A673 (cell line): ENCODE measurements at regions of chr5 and their contacts with region 1.

Region 1: DNA sequence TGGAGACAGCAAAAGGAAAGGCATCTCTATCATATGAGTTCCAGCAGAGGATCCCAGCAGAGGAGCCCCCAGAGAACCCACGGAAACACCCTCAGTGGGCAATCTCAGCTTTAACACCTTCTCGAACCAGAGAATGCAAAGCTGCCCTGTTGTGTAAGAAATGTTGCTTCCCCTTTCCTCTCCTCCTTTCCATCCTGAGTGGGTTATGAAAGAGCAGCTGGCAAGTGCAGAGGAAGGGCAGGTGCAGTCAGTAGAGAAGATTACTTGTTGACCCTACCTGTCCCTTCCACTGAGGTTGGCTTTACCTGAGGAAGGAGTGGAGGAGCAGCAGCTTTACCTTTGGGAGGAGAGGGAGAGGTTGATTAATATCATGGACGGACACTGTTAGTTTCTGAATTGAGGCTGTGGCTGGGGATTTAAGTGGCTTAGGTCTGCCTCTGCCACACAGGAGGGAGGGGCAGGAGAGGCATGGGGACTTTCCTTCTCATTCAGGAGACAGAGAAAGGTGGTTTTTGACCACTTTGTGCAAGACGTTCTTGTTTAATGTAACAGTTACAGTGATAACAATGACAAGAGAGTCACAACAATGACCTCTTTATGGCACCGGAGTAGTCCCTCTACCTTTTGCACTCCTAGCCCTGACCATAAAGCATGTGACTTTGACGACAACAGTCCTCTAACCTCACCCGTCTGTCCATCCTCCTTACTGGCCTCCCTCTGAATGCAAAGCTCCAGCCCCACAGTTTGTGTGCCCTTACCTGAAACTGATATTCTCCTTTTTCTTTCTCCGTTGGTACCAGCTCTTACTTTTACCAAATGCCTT is 254.8 kb downstream of the NSG2 start:
- DNase-seq: no peak
- H3K4me3 ChIP-seq: no peak overlapping the region
- H3K27ac ChIP-seq: no peak overlapping the region
- H3K4me1 ChIP-seq: no peaks in the 10 kb centered on the region
- H3K27me3 ChIP-seq: peaks cover 5% of the 10 kb centered on the region
- CTCF ChIP-seq: no peak

Region 2: DNA sequence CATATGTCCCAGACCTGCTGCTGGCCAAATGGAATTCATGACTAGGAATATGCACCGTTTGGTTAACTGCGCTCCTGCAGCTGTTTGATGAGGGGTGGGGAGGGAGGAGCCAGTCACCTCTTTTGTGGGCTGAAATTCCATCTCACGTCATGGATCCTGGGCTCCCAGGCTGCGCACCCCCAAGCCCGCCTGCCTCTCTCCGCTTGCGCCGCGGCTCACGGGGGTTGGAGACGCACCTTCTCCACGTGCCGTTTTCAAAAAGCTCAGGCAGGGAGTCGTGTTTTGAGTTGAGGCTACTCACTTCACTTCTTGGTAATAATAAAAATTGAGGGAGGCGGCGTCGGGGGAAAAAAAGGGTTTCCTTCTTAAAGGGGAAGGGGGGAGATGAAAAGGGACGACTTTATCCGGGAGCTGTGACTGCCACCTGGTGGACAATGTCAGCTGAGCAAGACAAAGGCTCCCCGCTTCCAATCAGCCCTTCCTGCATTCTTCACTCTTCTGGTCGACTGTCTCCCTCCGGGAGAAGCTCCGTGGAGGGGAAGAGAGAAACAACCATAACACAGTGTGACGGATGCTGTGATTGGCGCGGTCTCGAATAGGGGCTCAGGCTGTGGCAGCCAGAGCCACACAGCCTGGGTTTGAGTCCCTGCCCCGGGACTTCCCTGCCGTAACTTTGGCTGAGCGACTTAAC is 327.3 kb before region 1 on chr5:
- CTCF ChIA-PET with region 1: interaction called, 11 read pairs
- POLR2A ChIA-PET with region 1: no interaction called
- intact Hi-C with region 1: no loop called
- DNase-seq: peak; percentile 72
- H3K4me3 ChIP-seq: peak overlapping the region; percentile 31
- H3K27ac ChIP-seq: no peak overlapping the region
- H3K4me1 ChIP-seq: no peaks in the 10 kb centered on the region
- H3K27me3 ChIP-seq: no peaks in the 10 kb centered on the region
- CTCF ChIP-seq: peak; percentile 79

Region 3: GRCh38 chr5:174172152-174172551 is 128.2 kb before region 1 on chr5:
- CTCF ChIA-PET with region 1: no interaction called
- POLR2A ChIA-PET with region 1: no interaction called
- intact Hi-C with region 1: no loop called
- DNase-seq: no peak
- H3K4me3 ChIP-seq: no peak overlapping the region
- H3K27ac ChIP-seq: no peak overlapping the region
- H3K4me1 ChIP-seq: no peaks in the 10 kb centered on the region
- H3K27me3 ChIP-seq: no peaks in the 10 kb centered on the region
- CTCF ChIP-seq: no peak

Region 4: GRCh38 chr5:174371595-174372128 is 71.3 kb after region 1 on chr5:
- CTCF ChIA-PET with region 1: no interaction called
- POLR2A ChIA-PET with region 1: no interaction called
- intact Hi-C with region 1: no loop called
- DNase-seq: peak; percentile 70
- H3K4me3 ChIP-seq: no peak overlapping the region
- H3K27ac ChIP-seq: no peak overlapping the region
- H3K4me1 ChIP-seq: no peaks in the 10 kb centered on the region
- H3K27me3 ChIP-seq: peaks cover 5% of the 10 kb centered on the region
- CTCF ChIP-seq: no peak